ENCODE measurements at regions of chr20 and their contacts with region 1.

Region 1: GRCh38 chr20:48731536-48732454 is 96.0 kb downstream of the PREX1 start:
- DNase-seq: no peak
- H3K4me3 ChIP-seq: no peak overlapping the region
- H3K27ac ChIP-seq: peak overlapping the region in 1 of 2 donors; percentile 51
- H3K4me1 ChIP-seq: peaks cover 9 to 28% of the 10 kb centered on the region in 2 donors
- H3K27me3 ChIP-seq: no peaks in the 10 kb centered on the region
- CTCF ChIP-seq: no peak

Region 2: GRCh38 chr20:48904365-48905296 is 172.8 kb after region 1 on chr20:
- intact Hi-C with region 1: loop called (anchors 2 kb)
- DNase-seq: peak in 1 of 2 donors; percentile 78
- H3K4me3 ChIP-seq: no peak overlapping the region
- H3K27ac ChIP-seq: no peak overlapping the region
- H3K4me1 ChIP-seq: peaks cover 3 to 4% of the 10 kb centered on the region in 2 donors
- H3K27me3 ChIP-seq: no peaks in the 10 kb centered on the region
- CTCF ChIP-seq: peak; percentile 69 to 87 (median 81)

Measured in ascending aorta (tissue), 2 donors.